ENCODE measurements at regions of chr6 and their contacts with region 1.

Region 1: GRCh38 chr6:44010411-44011349 is 116.6 kb downstream of the MRPL14 start:
- DNase-seq: peak; percentile 99
- H3K4me3 ChIP-seq: no peak overlapping the region
- CTCF ChIP-seq: no peak

Region 2: DNA sequence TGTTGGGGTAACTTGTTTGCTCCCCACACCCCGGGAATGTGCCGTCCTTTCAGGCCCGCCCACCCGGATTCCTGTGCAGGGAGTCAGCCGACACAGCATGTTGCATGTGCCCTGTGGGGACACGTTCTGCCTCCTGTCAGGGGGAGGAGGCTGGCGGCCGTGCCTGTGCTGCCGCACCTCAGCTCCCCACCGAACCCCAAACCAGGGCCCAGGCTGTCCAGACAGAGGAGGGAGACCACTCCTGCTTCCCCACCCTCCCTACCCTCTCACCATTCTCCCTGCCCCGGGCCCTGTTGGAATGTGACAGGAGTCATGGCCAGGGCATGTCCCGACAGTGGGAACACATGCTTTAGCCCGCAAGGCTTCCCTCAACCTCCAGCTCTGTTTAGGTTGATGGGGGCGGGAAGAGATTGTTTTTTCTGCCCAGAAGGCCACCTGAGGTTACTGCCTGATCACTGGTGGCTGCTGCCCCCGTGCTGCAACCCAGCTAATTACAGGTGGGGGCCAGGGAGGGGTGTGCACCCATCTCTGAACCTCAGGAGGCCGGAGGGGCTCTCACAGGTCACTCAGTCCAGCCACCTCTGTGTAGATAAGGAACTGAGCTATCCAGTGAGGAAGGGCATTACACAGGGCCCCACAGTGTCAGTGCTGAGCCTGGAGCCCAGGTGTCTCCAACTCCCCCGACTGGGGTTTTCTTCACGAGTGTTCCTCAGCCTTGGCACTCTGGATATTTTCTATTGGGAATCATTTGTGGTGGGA is 514.1 kb before region 1 on chr6:
- CTCF ChIA-PET with region 1: no interaction called
- POLR2A ChIA-PET with region 1: no interaction called
- DNase-seq: no peak
- H3K4me3 ChIP-seq: no peak overlapping the region
- CTCF ChIP-seq: peak; percentile 67

Region 3: GRCh38 chr6:43983632-43984031 is 27.0 kb before region 1 on chr6:
- CTCF ChIA-PET with region 1: no interaction called
- POLR2A ChIA-PET with region 1: no interaction called
- DNase-seq: no peak
- H3K4me3 ChIP-seq: no peak overlapping the region
- CTCF ChIP-seq: no peak

Region 4: DNA sequence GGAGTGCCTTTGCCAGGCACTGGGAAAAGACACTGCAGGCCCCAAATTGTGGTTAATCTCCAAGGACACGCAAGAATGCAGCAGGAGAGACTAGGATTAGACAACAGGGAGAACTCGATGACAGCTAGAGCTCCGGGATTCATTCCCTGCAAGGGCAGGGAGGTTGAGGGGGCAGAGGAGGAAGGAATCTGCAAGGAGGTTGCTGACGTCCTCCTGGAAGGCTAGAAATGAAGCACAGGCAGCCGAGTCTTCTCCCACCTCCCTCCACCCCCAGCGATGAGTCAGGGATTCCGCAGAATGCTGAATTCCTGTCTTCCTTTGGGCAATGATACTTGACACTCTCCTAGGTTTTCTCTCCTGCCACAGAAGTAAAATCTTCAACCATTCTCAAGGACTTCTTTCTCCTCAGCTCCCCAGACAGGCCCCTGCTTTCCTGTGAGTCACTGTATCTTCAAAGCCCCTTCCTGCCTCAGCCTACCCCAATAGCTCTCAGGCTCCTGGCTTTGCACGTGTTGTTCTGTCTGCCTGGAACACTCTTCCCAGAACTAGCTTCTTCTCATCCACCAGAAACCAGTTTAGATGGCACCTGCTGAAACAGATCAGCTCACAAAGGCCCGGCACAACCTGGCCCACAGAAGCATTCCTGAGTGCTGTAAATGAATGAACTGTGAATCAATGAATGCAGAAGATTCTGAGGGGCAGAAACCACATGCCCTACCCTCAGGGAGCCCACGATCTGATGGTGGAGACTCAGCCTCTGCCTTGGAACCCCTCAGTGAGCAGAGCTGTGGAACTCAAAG is 31.0 kb after region 1 on chr6:
- CTCF ChIA-PET with region 1: interaction called, 4 read pairs
- POLR2A ChIA-PET with region 1: interaction called, 25 read pairs
- DNase-seq: peak; percentile 99
- H3K4me3 ChIP-seq: no peak overlapping the region; the same call in 1 of the 2 replicates
- CTCF ChIP-seq: no peak

Region 5: GRCh38 chr6:44052419-44053023 is 41.8 kb after region 1 on chr6:
- CTCF ChIA-PET with region 1: interaction called, 3 read pairs
- POLR2A ChIA-PET with region 1: interaction called, 17 read pairs
- DNase-seq: no peak
- H3K4me3 ChIP-seq: no peak overlapping the region
- CTCF ChIP-seq: no peak

Region 6: GRCh38 chr6:44058617-44059358 is 48.1 kb after region 1 on chr6:
- CTCF ChIA-PET with region 1: interaction called, 6 read pairs
- POLR2A ChIA-PET with region 1: interaction called, 17 read pairs
- DNase-seq: peak; percentile 99
- H3K4me3 ChIP-seq: no peak overlapping the region
- CTCF ChIP-seq: no peak

Measured in AG04449 (cell line).